Dorsolateral prefrontal cortex (tissue), 120 donors: ENCODE measurements at regions of chr13 and their contacts with region 1.

Region 1: GRCh38 chr13:102947745-102948405 is 102.0 kb downstream of the ERCC5 start:
- DNase-seq: peak; percentile 33 to 82 (median 70)
- H3K4me3 ChIP-seq: peak overlapping the region in 8 of 59 donors; percentile 0 to 30 (median 15)
- H3K27ac ChIP-seq: peak overlapping the region; percentile 27 to 97 (median 87)
- H3K27me3 ChIP-seq: peaks cover 0 to 3% (median 0%) of the 10 kb centered on the region in 45 donors
- CTCF ChIP-seq: peak; percentile 28 to 81 (median 56)

Region 2: DNA sequence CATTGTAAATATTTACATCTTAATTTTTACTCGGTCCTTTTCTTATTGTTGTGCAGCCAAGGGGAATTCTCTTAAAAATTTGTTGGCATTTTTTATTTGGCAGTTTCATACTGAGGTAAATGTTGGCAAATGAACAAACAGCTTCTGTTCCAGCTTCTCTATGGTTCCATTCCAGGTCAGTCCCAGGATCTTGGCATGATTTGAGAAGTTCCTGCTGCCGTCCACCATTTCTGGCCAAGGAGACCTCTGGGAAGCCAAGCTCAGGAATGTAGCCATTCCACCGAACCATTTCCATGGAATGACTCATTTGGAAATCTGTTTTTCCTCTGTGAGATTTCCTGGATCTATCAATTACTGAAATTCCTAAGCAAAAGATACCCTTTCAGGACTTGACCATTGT is 74.5 kb after region 1 on chr13:
- intact Hi-C with region 1: no loop called
- DNase-seq: peak in 1 of 10 donors; percentile 41
- H3K4me3 ChIP-seq: no peak overlapping the region
- H3K27ac ChIP-seq: no peak overlapping the region
- H3K27me3 ChIP-seq: no peaks in the 10 kb centered on the region
- CTCF ChIP-seq: no peak

Region 3: GRCh38 chr13:103097366-103097928 is 149.6 kb after region 1 on chr13:
- intact Hi-C with region 1: loop called in 1 of 2 experiments (anchors 5 kb)
- DNase-seq: peak in 9 of 10 donors; percentile 42 to 89 (median 76)
- H3K4me3 ChIP-seq: no peak overlapping the region
- H3K27ac ChIP-seq: peak overlapping the region in 26 of 59 donors; percentile 4 to 75 (median 53)
- H3K27me3 ChIP-seq: no peaks in the 10 kb centered on the region
- CTCF ChIP-seq: peak in 7 of 56 donors; percentile 11 to 33 (median 23)

Region 4: GRCh38 chr13:103140001-103140671 is 192.3 kb after region 1 on chr13:
- intact Hi-C with region 1: loop called (anchors 5 to 10 kb)
- DNase-seq: no peak
- H3K4me3 ChIP-seq: no peak overlapping the region
- H3K27ac ChIP-seq: no peak overlapping the region
- H3K27me3 ChIP-seq: peaks cover 0 to 11% (median 0%) of the 10 kb centered on the region in 45 donors
- CTCF ChIP-seq: peak in 53 of 56 donors; percentile 16 to 70 (median 48)

Region 5: GRCh38 chr13:103188713-103189326 is 240.9 kb after region 1 on chr13:
- intact Hi-C with region 1: loop called in 1 of 2 experiments (anchors 5 kb)
- DNase-seq: no peak
- H3K4me3 ChIP-seq: peak overlapping the region in 16 of 59 donors; percentile 4 to 39 (median 20)
- H3K27ac ChIP-seq: no peak overlapping the region
- H3K27me3 ChIP-seq: no peaks in the 10 kb centered on the region
- CTCF ChIP-seq: peak; percentile 44 to 78 (median 65)

Region 6: DNA sequence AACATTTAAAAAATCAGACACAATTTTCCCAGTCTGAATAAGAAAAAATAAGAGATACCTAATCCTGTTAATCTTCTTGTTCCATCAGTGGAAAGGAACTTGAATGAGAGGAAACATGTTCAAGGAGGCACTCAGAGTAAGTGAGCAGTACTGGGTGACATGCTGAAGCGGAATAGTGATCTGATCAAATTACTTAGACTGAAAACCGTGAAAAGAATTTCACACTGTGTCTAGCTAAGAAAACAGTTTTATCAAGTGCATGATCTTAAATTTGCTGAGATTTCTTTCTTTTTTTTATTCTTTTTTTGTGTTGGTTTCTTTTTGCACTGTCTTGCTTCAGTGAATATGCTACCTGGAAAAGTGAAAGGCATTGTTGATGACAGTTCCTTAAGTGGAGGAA is 367.8 kb after region 1 on chr13:
- intact Hi-C with region 1: loop called in 1 of 2 experiments (anchors 10 kb)
- DNase-seq: no peak
- H3K4me3 ChIP-seq: no peak overlapping the region
- H3K27ac ChIP-seq: no peak overlapping the region
- H3K27me3 ChIP-seq: no peaks in the 10 kb centered on the region
- CTCF ChIP-seq: no peak